Thyroid gland (tissue), 4 donors: ENCODE measurements at regions of chr2 and their contacts with region 1.

Region 1: DNA sequence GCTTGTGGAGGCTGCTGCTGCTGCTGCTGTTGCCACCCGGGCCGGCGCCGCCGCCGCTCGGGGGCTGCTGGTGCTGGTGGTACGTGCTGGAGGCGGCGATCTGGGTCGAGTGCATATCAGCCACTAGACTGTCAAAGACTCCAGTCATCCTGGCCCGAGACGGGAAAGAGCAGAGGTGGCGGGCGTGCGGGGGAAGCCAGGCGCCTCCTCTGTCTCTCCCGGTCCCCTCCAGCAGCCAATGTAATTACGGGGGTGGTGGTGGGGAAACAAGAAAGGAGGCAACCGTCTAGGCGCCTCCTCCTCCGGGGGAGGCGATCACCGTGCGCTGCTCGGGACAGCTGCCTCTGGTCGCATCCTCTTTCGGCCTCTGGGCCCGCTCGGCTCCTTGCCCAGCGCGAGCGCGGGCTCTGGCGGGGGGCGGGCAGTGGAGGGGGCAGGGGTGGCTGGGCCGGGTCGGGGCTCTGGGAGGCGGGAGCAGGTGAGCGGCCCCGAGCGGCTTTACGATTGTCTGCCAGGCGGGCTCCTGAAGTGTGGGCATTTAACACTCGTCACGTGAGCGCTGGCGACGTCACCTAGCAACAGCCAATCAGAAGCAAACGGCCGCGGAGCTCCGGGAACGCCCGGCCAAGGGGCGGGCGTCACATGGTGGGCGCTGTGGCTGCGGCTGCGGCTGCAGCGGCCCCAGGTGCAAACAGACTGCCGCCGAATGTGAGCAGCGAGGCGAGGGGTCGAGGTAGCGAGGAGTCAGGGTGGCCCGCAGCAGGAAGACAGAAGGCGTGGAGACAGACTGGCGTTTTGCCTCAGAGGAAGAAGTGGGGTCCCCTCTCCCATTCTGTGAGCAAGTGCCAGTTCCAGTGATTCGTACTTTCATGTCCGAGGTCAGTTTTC is at the start of gene DLX2:
- DNase-seq: peak; percentile 52 to 64
- H3K4me3 ChIP-seq: peak within 1 kb of the TSS in 1 of 3 donors; percentile 42
- H3K27ac ChIP-seq: peak within 1 kb of the TSS in 1 of 3 donors; percentile 35
- H3K4me1 ChIP-seq: peaks cover 28 to 61% of the 10 kb centered on the region in 2 donors
- H3K27me3 ChIP-seq: peaks cover 75% of the 10 kb centered on the region
- CTCF ChIP-seq: no peak
- POLR2A ChIP-seq: no peak
- total RNA-seq, gene DLX2: 0.25 to 0.78 (median 0.40) TPM in 3 of 4 donors, not detected in the other

Region 2: DNA sequence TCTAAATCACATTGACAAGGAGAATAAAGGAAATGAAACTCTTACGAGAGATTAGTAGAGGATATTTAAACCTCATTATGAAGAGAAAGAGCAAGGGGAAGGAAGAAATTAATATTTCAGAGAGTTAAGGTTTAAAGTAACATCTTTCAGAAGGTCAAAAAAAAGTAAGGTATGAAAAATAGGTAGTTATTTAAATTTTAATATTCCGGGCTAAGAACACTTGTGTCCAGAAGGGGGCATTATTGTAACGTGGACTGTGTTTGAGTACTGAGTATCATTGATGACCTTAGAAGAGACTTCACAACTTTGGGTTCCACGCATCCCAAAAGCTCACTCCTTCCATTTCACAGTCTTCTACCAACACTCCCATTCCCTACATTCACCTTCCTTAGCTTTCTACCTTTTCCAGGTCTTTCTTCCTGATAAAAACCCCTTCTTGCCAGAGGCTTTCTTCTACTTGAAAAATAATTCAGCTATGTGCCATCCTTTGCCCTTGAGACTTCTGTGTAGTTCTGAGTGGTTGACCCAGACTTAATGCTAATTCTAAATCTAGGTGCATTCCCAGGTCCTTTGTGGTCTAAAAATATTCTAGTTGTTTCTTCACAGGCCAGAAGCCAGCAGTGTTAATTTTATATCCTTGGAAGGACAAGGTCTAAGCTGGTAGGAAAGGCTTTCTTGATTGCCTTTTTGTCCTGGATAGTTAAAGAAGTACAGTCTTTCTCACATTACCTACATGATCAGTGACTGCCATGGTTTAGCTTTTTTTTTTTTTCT is 398.9 kb before region 1 on chr2:
- intact Hi-C with region 1: loop called (anchors 10 kb)
- DNase-seq: no peak
- H3K4me3 ChIP-seq: no peak overlapping the region
- H3K27ac ChIP-seq: no peak overlapping the region
- H3K4me1 ChIP-seq: peaks cover 0 to 7% of the 10 kb centered on the region in 2 donors
- H3K27me3 ChIP-seq: no peaks in the 10 kb centered on the region
- CTCF ChIP-seq: peak in 4 of 6 experiments; percentile 14 to 47 (median 42)
- POLR2A ChIP-seq: no peak

Region 3: GRCh38 chr2:171811245-171811628 is 291.4 kb before region 1 on chr2:
- intact Hi-C with region 1: loop called (anchors 5 kb)
- DNase-seq: no peak
- H3K4me3 ChIP-seq: no peak overlapping the region
- H3K27ac ChIP-seq: no peak overlapping the region
- H3K4me1 ChIP-seq: no peaks in the 10 kb centered on the region
- H3K27me3 ChIP-seq: no peaks in the 10 kb centered on the region
- CTCF ChIP-seq: peak in 3 of 6 experiments; percentile 34 to 41 (median 38)
- POLR2A ChIP-seq: no peak

Region 4: GRCh38 chr2:171999604-172000469 is 102.8 kb before region 1 on chr2 and contains the start of gene METAP1D:
- intact Hi-C with region 1: loop called (anchors 10 kb)
- DNase-seq: peak; percentile 90 to 91
- H3K4me3 ChIP-seq: peak within 1 kb of the TSS; percentile 13 to 68 (median 66)
- H3K27ac ChIP-seq: no peak within 1 kb of the TSS
- H3K4me1 ChIP-seq: peaks cover 4 to 5% of the 10 kb centered on the region in 2 donors
- H3K27me3 ChIP-seq: no peaks in the 10 kb centered on the region
- CTCF ChIP-seq: no peak
- POLR2A ChIP-seq: peak in 1 of 2 donors; percentile 58
- total RNA-seq, gene METAP1D: 5.2 to 30.9 (median 7.3) TPM

Region 5: GRCh38 chr2:172131713-172132555 is 29.3 kb after region 1 on chr2:
- intact Hi-C with region 1: no loop called
- DNase-seq: no peak
- H3K4me3 ChIP-seq: no peak overlapping the region
- H3K27ac ChIP-seq: no peak overlapping the region
- H3K4me1 ChIP-seq: no peaks in the 10 kb centered on the region
- H3K27me3 ChIP-seq: no peaks in the 10 kb centered on the region
- CTCF ChIP-seq: no peak
- POLR2A ChIP-seq: no peak

Region 6: GRCh38 chr2:172200495-172201085 is 98.0 kb after region 1 on chr2:
- intact Hi-C with region 1: no loop called
- DNase-seq: no peak
- H3K4me3 ChIP-seq: no peak overlapping the region
- H3K27ac ChIP-seq: no peak overlapping the region
- H3K4me1 ChIP-seq: no peaks in the 10 kb centered on the region
- H3K27me3 ChIP-seq: no peaks in the 10 kb centered on the region
- CTCF ChIP-seq: peak in 4 of 6 experiments; percentile 6 to 27 (median 25)
- POLR2A ChIP-seq: no peak